GM18951 (cell line): ENCODE measurements at regions of chr9 and their contacts with region 1.

Region 1: GRCh38 chr9:33081128-33081851 is 4.8 kb upstream of the SMU1 start:
- POLR2A ChIP-seq: no peak

Region 2: GRCh38 chr9:33223696-33224095 is 142.4 kb after region 1 on chr9:
- in situ Hi-C with region 1: loop called (anchors 5 kb)
- POLR2A ChIP-seq: no peak

Region 3: GRCh38 chr9:33737811-33738606 is 656.7 kb after region 1 on chr9:
- in situ Hi-C with region 1: no loop called
- POLR2A ChIP-seq: no peak